A549 (cell line): ENCODE measurements at regions of chr16 and their contacts with region 1.

Region 1: GRCh38 chr16:48365581-48366164 is 19.5 kb downstream of the SIAH1 start:
- DNase-seq: peak; percentile 71 to 93
- ATAC-seq: peak; percentile 95 to 99
- H3K4me3 ChIP-seq: peak overlapping the region; percentile 53
- H3K27ac ChIP-seq: peak overlapping the region; percentile 90 to 92
- H3K4me1 ChIP-seq: peaks cover 46% of the 10 kb centered on the region
- CTCF ChIP-seq: no peak
- EP300 ChIP-seq: no peak
- POLR2A ChIP-seq: peak; percentile 80
- RAD21 ChIP-seq: peak in 1 of 2 experiments; percentile 9; a peak in 1 of 5 replicates

Region 2: DNA sequence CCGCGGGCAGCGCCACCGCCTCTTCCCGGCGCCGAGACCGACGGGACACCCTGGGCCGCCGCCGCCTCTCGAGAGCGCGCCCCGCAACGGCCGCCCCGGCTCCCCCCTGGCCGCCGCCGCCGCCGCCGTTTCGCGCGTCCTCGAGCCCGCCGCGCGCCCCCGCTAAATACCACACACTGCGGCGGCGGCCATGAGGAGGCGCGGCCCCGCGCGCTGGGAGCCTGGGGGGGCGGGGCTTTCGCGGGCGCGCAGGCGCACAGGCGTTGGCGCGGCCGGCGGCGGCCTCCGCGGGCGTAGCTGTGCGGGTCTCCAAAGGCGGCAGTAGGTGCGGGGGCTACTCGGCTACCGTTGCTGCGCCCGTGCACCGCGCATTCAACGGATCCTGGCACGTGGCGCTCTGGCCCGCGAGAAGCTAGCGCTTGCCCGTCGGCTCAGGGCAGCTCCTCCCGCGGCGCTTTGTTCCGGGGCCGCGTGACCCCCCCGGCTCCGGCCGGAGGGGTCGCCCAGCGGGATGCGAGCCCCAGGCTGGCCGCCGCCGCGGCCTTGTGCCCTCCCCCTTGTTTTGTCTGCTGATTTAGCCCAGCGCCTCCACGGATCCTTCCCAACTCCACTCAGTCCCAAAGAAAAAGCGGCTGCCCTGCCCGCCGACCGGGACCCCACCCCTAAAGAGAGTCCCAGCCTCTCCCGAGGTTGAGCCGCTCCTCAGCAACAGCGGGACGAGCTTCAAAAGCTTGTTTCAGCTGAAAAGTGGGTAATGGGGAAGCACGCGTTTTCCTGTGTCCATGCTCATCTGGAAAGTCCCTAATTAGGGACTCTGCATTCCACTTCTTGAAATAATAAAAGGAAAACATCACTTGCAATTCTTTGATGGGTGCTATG is 19.8 kb after region 1 on chr16 and contains the start of gene SIAH1:
- CTCF ChIA-PET with region 1: interaction called, 4 read pairs
- POLR2A ChIA-PET with region 1: interaction called, 55 read pairs
- DNase-seq: peak; percentile 76 to 82
- ATAC-seq: peak; percentile 75 to 77
- H3K4me3 ChIP-seq: peak within 1 kb of the TSS; percentile 60
- H3K27ac ChIP-seq: peak within 1 kb of the TSS; percentile 99
- H3K4me1 ChIP-seq: peaks cover 21% of the 10 kb centered on the region
- CTCF ChIP-seq: no peak
- EP300 ChIP-seq: no peak
- POLR2A ChIP-seq: peak; percentile 93
- RAD21 ChIP-seq: peak in 1 of 2 experiments; percentile 33; a peak in 3 of 5 replicates
- polyA plus RNA-seq, gene SIAH1: 28.5 and 30.0 TPM in 2 replicates

Region 3: GRCh38 chr16:48511071-48511540 is 145.4 kb after region 1 on chr16:
- CTCF ChIA-PET with region 1: no interaction called
- POLR2A ChIA-PET with region 1: no interaction called
- DNase-seq: no peak
- ATAC-seq: peak in 1 of 2 experiments; percentile 39; a peak in 3 of 6 replicates
- H3K4me3 ChIP-seq: no peak overlapping the region
- H3K27ac ChIP-seq: no peak overlapping the region
- H3K4me1 ChIP-seq: no peaks in the 10 kb centered on the region
- CTCF ChIP-seq: no peak
- EP300 ChIP-seq: no peak
- POLR2A ChIP-seq: no peak
- RAD21 ChIP-seq: no peak

Region 4: GRCh38 chr16:48542020-48542473 is 176.4 kb after region 1 on chr16:
- CTCF ChIA-PET with region 1: interaction called, 12 read pairs
- POLR2A ChIA-PET with region 1: interaction called, 3 read pairs
- DNase-seq: peak; percentile 56 to 66
- ATAC-seq: peak; percentile 85 to 89
- H3K4me3 ChIP-seq: no peak overlapping the region
- H3K27ac ChIP-seq: peak overlapping the region in 1 of 2 experiments; percentile 30; a peak in 2 of 6 replicates
- H3K4me1 ChIP-seq: 0 out of 3 replicates have a peak, but pooled peaks cover 5% of the 10 kb centered on the region
- CTCF ChIP-seq: peak; percentile 75
- EP300 ChIP-seq: no peak
- POLR2A ChIP-seq: no peak
- RAD21 ChIP-seq: peak; percentile 89